ENCODE measurements at regions of chr18 and their contacts with region 1.

Region 1: GRCh38 chr18:13629841-13630715 is 96.3 kb downstream of the FAM210A start:
- DNase-seq: peak; percentile 74
- ATAC-seq: peak; percentile 98
- H3K4me3 ChIP-seq: no peak overlapping the region
- H3K27ac ChIP-seq: no peak overlapping the region
- H3K4me1 ChIP-seq: no peaks in the 10 kb centered on the region
- H3K27me3 ChIP-seq: peaks cover 48% of the 10 kb centered on the region
- CTCF ChIP-seq: peak; percentile 88

Region 2: DNA sequence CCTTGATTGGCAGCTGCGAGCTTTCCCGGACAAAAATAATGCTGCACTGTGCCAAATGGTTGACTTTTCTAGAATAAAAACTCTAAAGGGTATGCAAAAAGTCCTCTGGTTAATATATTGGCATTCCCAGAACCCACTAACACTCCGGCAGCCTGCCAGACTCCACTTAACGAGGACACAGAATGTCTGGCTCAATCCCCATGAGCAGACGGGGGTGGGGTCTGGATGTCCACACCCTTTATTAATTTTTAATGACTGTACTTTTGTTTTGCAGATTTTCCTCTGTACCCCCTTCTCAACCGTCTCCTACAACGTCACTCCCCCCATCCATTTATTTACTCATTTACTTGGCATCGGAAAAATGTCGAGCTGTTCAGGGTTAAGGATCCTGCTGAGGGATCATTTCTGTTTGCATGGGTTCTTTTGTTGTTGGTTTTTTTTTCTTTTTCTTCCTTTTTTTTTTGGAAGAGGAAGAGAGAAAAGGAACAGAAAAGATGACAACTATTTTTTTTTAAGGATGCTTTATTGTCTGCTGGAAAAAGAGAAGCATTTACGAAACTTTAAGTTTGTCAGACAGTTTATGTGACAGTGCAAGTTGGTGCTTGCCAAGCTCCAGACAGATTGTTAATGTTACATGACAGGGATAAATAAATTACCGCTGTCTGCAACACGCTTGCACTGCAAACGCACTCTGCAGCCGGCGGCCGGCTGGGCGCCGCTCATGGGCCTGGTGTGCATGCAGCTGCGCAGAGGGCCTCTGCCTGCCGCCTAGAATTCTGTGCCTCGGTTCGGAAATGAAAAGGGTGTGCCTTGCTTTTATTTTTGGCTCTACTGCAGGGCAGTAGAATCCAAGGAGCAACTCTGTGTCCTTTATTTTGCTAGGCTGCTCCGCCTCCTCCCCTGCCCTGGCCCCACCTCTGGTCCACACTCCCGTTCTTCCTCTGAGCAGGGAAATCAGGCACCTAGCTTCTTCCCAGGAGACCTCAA is 407.9 kb before region 1 on chr18:
- CTCF ChIA-PET with region 1: no interaction called
- POLR2A ChIA-PET with region 1: no interaction called
- intact Hi-C with region 1: loop called (anchors 10 kb)
- DNase-seq: no peak
- ATAC-seq: peak; percentile 6; the same call in 1 of the 2 replicates
- H3K4me3 ChIP-seq: no peak overlapping the region
- H3K27ac ChIP-seq: no peak overlapping the region
- H3K4me1 ChIP-seq: no peaks in the 10 kb centered on the region
- H3K27me3 ChIP-seq: peaks cover 79% of the 10 kb centered on the region
- CTCF ChIP-seq: no peak

Region 3: DNA sequence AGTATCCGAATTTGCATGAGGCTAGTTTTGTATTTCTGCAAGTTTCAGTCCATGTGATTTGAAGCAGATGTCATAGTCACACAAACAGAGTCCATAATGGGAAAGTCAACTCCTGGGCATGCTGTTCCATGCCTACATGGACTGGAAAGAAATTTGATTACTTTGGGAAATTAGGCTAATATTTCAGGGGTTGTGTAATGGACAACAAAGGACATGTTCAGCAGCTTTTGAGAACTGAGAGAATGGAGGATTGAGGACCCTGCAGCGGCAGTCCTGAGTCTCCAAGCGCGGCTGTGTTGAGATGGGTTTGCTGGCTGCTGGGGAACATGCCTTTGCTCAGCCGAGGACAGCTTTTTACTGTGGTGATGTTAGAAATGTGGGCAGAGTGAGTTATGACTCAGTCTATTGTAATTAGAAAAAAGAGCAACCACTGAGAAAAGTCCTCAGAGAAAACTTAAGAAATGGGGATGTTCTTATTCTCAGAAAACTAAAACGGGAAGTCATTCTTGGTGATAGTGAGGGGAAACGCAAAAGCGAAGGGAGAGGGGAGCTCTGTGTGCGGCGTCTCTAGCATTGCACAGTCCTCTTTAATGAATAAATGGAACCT is 52.9 kb before region 1 on chr18:
- CTCF ChIA-PET with region 1: no interaction called
- POLR2A ChIA-PET with region 1: no interaction called
- intact Hi-C with region 1: no loop called
- DNase-seq: peak; percentile 22
- ATAC-seq: peak; percentile 43
- H3K4me3 ChIP-seq: no peak overlapping the region
- H3K27ac ChIP-seq: no peak overlapping the region
- H3K4me1 ChIP-seq: no peaks in the 10 kb centered on the region
- H3K27me3 ChIP-seq: peaks cover 54% of the 10 kb centered on the region
- CTCF ChIP-seq: no peak